ENCODE measurements at regions of chr13 and their contacts with region 1.

Region 1: GRCh38 chr13:79379274-79379673 is 26.8 kb downstream of the RBM26 start:
- DNase-seq: no peak
- H3K4me3 ChIP-seq: no peak overlapping the region
- H3K27ac ChIP-seq: no peak overlapping the region
- H3K4me1 ChIP-seq: peaks cover 0 to 6% (median 0%) of the 10 kb centered on the region in 4 donors
- H3K27me3 ChIP-seq: no peaks in the 10 kb centered on the region
- CTCF ChIP-seq: no peak

Region 2: DNA sequence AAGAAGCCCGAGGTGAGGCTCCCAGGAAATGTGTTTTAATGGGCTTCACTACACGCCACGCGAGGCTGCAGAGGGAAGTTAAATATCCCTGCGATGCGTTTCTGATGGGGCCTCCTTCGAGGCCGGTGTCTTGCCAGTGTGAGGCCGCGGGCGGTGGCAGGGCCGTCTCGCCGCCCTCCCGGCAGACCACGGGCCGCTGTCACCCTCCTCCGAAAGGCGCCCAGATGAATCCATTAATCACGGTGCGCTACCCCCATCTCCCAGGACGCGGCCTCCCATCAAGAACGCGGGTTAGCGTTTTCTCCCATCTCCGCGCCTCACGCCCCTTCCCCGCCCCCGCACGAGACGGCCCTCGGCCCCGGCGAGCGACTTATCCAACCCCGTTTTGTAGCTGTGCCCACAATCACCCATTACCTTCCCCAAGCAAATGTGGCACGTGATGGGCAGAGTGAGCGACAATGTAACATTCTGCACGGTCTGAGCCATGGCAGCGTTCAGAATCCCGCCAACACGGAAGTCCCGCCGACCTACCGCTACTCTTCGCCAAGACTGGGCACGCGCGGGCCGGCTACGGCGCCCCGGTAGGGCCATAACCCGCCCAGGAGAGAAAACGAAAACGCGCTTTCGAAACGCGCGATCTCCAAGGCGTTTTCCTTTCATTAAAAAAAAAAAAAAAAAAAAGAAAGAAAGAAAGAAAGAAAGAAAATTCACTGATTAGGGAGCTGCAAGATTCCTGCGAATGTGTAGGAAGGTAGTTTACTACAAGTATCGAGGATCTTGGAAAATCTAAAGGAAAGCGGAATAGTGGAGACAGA is 720.4 kb before region 1 on chr13 and contains the start of gene OBI1:
- intact Hi-C with region 1: loop called (anchors 5 kb)
- DNase-seq: peak; percentile 89 to 93
- H3K4me3 ChIP-seq: peak within 1 kb of the TSS; percentile 86 to 99
- H3K27ac ChIP-seq: peak within 1 kb of the TSS; percentile 75 to 80
- H3K4me1 ChIP-seq: peaks cover 0 to 23% (median 10%) of the 10 kb centered on the region in 4 donors
- H3K27me3 ChIP-seq: no peaks in the 10 kb centered on the region
- CTCF ChIP-seq: no peak

Region 3: GRCh38 chr13:79056706-79057105 is 322.6 kb before region 1 on chr13:
- intact Hi-C with region 1: no loop called
- DNase-seq: no peak
- H3K4me3 ChIP-seq: no peak overlapping the region
- H3K27ac ChIP-seq: no peak overlapping the region
- H3K4me1 ChIP-seq: no peaks in the 10 kb centered on the region
- H3K27me3 ChIP-seq: no peaks in the 10 kb centered on the region
- CTCF ChIP-seq: no peak